ENCODE measurements at regions of chr16 and their contacts with region 1.

Region 1: DNA sequence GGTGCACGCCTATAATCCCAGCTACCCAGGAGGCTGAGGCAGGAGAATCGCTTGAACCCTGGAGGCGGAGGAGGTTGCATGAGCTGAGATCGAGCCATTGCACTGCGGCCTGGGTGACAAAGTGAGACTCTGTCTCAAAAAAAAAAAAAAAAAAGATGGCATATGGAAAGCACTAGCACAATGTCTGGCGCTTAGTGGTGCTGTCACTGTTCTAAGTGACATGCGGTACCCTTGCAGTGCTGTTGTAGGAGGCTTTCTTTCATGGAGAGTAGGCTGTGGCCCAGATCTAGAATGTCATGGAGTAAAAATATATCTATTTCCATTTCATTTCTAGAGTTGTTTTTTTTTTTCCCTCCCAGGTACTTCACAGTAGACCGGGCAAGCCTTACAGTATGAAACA is 14.6 kb upstream of the METTL9 start:
- DNase-seq: no peak
- ATAC-seq: no peak
- H3K4me3 ChIP-seq: no peak overlapping the region
- H3K27ac ChIP-seq: no peak overlapping the region
- H3K4me1 ChIP-seq: no peaks in the 10 kb centered on the region
- H3K27me3 ChIP-seq: no peaks in the 10 kb centered on the region

Region 2: GRCh38 chr16:21638573-21638975 is 53.8 kb after region 1 on chr16:
- intact Hi-C with region 1: loop called in 2 of 4 experiments (anchors 5 kb)
- DNase-seq: no peak
- ATAC-seq: no peak
- H3K4me3 ChIP-seq: no peak overlapping the region
- H3K27ac ChIP-seq: no peak overlapping the region
- H3K4me1 ChIP-seq: peaks cover 3% of the 10 kb centered on the region
- H3K27me3 ChIP-seq: no peaks in the 10 kb centered on the region

Region 3: DNA sequence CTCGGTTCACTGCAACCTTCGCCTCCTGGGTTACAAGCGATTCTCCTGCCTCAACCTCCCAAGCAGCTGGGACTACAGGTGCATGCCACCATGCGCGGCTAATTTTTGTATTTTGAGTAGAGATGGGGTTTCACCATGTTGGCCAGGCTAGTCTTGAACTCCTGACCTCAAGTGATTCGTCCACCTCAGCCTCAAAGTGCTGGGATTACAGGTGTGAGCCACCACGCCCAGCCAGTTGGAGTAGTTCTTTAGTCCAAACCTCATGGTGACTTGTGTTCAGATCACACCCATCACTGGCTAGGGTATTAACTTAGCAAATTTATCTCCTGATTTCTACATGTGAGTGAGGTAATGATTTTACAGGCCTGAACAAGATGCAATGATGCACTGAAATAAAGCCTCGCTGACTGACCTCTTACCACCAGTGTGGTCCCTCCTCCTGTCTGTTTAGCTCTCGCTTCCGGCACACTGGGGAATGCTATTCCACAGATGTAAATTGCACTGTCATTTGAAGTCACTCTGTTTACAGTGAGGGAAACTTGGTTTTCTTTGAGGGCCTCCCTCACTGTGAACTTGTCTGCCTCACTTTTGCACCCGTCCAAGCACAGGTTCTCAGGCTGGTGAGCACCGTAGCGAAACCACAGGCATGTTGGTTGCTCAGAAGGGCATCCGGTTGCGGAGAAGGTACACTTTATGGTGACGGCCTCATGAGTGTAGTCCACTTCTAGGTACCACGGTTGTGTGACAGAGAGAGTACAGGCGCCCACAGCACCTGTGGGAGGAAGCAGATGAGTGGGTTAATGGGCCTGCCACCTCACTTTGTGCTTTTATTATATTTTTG is 62.1 kb after region 1 on chr16:
- intact Hi-C with region 1: loop called in 2 of 4 experiments (anchors 5 kb)
- DNase-seq: no peak
- ATAC-seq: no peak
- H3K4me3 ChIP-seq: no peak overlapping the region
- H3K27ac ChIP-seq: no peak overlapping the region
- H3K4me1 ChIP-seq: peaks cover 3% of the 10 kb centered on the region
- H3K27me3 ChIP-seq: no peaks in the 10 kb centered on the region

Region 4: GRCh38 chr16:21698169-21699032 is 113.6 kb after region 1 on chr16:
- intact Hi-C with region 1: loop called in 1 of 4 experiments (anchors 10 kb)
- DNase-seq: no peak
- ATAC-seq: no peak
- H3K4me3 ChIP-seq: no peak overlapping the region
- H3K27ac ChIP-seq: no peak overlapping the region
- H3K4me1 ChIP-seq: no peaks in the 10 kb centered on the region
- H3K27me3 ChIP-seq: no peaks in the 10 kb centered on the region

Region 5: DNA sequence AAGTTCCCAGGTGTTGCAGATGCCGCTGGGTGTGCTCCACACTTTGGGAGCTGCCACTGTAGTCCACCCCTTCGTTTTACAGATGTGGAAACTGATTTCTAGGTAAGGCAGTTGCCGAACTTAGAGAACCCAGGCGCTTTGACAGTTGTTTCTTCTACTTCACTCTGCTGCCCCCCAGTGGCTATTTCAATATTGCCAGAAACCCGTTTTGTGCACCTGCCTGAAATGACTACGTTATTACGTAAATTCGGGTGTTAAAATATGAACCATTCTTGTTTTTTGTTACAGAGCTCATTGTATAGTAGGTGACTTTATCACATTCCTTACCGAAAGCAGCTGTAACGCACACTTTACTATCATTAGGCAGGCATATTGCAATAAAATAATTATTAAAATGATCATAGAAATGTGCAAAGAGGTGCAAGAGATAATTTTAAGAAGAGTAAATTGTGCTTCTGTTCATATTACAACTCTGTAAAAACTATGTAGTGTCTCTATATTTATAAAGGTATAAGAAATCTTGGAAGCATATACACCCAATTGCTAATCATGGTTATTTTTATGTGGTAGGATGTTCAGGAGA is 123.8 kb after region 1 on chr16:
- intact Hi-C with region 1: loop called in 3 of 4 experiments (anchors 2 to 5 kb)
- DNase-seq: peak; percentile 52 to 84 (median 56)
- ATAC-seq: peak; percentile 31 to 44
- H3K4me3 ChIP-seq: no peak overlapping the region
- H3K27ac ChIP-seq: no peak overlapping the region
- H3K4me1 ChIP-seq: no peaks in the 10 kb centered on the region
- H3K27me3 ChIP-seq: no peaks in the 10 kb centered on the region

Measured in right cardiac atrium (tissue), 5 donors.